ENCODE measurements at regions of chr15 and their contacts with region 1.

Region 1: GRCh38 chr15:33737687-33738601 is 230.4 kb upstream of the CHRM5 start:
- H3K4me3 Mint-ChIP-seq: no peak overlapping the region
- H3K27ac Mint-ChIP-seq: no peak overlapping the region
- H3K4me1 Mint-ChIP-seq: no peaks in the 10 kb centered on the region
- H3K27me3 Mint-ChIP-seq: peaks cover 2% of the 10 kb centered on the region

Region 2: DNA sequence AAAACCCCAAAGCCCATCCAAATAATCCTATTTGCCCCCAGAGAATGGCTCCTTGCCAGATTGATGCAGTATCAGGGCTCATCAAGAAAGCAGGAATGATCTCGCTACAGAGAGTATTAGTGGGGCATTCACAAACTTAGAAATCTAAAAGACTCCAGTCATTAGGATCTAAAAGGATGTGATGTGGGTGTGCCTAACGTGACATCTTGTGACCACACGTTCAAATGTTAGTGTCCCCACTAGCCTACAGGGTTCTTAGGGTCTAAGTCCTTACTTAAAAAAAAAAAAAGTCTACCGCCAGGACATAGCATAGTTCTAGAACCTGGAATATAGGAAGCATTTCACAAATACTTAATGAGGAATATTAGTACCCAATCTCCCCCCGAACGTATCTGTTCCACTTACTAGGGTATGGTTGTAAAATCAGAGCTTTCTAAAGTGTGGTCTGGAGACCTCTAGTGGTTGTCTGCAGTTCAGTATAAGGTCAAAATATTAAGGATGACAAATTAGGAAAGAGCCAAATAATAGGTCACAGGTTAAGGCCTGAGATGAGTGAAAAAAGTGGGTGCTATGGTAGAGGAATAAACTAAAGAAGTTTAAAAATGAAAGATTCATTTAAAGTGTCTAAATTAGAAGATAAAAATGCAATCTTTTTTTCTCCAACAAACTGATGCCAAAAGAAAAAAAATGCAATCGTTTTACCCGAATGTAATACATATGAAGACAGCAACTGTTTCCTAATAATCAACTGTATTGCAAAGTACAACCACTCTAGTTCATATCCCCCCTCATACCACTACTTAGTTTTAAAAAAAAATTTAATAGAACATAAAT is 226.1 kb after region 1 on chr15:
- intact Hi-C with region 1: loop called (anchors 5 kb)
- H3K4me3 Mint-ChIP-seq: no peak overlapping the region
- H3K27ac Mint-ChIP-seq: no peak overlapping the region
- H3K4me1 Mint-ChIP-seq: peaks cover 11% of the 10 kb centered on the region
- H3K27me3 Mint-ChIP-seq: no peaks in the 10 kb centered on the region